Gastrocnemius medialis (tissue), 4 donors: ENCODE measurements at regions of chr1 and their contacts with region 1.

Region 1: DNA sequence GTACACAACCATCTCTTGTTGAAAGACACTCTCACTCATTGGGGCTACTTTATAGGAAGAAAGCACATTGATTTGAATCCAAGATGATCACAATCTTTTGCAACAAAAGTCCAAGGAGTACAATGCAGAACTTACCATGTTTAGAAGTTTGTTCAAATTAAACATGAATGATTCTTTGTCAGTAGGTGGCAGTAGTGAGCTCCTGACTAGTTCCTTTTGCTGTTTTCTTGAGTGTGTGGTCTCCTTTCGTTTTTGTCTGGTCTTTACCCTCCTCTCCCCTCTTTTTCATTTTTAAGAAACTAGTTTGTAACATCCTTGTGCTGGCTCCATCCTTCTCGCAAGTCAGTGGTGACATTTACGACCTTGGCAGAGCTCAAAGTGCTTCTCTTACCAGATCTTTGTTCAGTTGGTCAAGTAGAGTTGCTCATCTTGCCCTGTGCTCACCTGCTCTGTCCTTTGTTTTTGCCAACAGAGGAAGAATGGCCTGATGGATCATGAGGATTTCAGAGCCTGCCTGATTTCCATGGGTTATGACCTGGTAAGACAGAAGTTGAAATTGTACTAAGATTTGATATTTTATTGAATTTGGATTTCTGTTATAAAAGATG is 35.7 kb upstream of the MTR start:
- DNase-seq: no peak
- ATAC-seq: peak; percentile 27 to 53
- H3K4me3 ChIP-seq: no peak overlapping the region
- H3K27ac ChIP-seq: peak overlapping the region in 2 of 4 donors; percentile 45 to 47
- H3K4me1 ChIP-seq: peaks cover 0 to 4% of the 10 kb centered on the region in 2 donors
- H3K27me3 ChIP-seq: no peaks in the 10 kb centered on the region
- CTCF ChIP-seq: peak in 4 of 5 experiments; percentile 31 to 66 (median 51)
- POLR2A ChIP-seq: no peak

Region 2: DNA sequence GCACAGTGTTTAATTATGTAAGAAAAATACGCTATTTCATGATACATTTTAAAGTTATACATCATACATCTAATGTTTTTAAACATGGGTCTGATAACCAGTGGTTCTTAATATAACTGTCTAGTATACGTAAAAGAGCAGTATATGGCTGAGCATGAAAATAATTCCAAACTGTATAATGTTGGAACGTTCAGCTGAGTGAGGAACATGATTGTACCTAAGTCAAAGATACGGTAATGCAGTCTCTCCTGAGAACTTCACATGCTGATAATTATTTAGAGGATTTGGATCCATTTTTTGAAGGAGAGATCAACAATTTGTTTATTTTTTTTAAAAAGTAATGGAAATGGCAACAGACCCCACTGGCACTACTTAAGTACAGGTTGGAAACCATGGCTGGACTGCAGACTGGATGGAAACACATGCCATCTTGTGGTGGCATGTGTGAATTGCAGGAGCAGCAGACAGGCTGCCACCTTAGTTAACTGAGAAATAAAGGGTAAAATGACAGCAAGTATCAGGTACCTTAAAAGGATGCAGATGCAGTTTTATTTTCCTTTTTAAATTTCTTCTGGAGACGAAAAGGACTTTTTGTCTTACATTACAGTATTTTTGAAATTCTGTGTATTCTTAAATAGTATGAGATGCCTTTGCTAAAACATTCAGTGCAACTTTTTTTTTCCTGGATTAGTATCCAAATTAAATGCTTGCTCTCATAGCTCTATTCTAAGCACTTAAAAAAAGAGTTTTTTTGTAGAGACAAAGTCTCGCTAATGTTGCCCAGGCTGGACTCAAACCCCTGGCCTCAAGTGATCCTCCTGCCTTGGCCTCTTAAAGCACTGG is 109.5 kb after region 1 on chr1:
- in situ Hi-C with region 1: no loop called
- intact Hi-C with region 1: loop called (anchors 10 kb)
- DNase-seq: no peak
- ATAC-seq: peak in 1 of 2 donors; percentile 64
- H3K4me3 ChIP-seq: no peak overlapping the region
- H3K27ac ChIP-seq: no peak overlapping the region
- H3K4me1 ChIP-seq: peaks cover 0 to 12% of the 10 kb centered on the region in 2 donors
- H3K27me3 ChIP-seq: no peaks in the 10 kb centered on the region
- CTCF ChIP-seq: peak; percentile 57 to 77 (median 67)
- POLR2A ChIP-seq: no peak

Region 3: GRCh38 chr1:236913371-236914037 is 154.1 kb after region 1 on chr1:
- in situ Hi-C with region 1: no loop called
- intact Hi-C with region 1: no loop called
- DNase-seq: no peak
- ATAC-seq: no peak
- H3K4me3 ChIP-seq: no peak overlapping the region
- H3K27ac ChIP-seq: no peak overlapping the region
- H3K4me1 ChIP-seq: no peaks in the 10 kb centered on the region
- H3K27me3 ChIP-seq: no peaks in the 10 kb centered on the region
- CTCF ChIP-seq: no peak
- POLR2A ChIP-seq: no peak